Activated CD4-positive, alpha-beta T cell treated with anti-CD3 and anti-CD28 coated beads, Interleukin-2, amount 10 ng/mL, durations not matched to agents 24 days and 14 days (primary cell): ENCODE measurements at regions of chr1 and their contacts with region 1.

Region 1: DNA sequence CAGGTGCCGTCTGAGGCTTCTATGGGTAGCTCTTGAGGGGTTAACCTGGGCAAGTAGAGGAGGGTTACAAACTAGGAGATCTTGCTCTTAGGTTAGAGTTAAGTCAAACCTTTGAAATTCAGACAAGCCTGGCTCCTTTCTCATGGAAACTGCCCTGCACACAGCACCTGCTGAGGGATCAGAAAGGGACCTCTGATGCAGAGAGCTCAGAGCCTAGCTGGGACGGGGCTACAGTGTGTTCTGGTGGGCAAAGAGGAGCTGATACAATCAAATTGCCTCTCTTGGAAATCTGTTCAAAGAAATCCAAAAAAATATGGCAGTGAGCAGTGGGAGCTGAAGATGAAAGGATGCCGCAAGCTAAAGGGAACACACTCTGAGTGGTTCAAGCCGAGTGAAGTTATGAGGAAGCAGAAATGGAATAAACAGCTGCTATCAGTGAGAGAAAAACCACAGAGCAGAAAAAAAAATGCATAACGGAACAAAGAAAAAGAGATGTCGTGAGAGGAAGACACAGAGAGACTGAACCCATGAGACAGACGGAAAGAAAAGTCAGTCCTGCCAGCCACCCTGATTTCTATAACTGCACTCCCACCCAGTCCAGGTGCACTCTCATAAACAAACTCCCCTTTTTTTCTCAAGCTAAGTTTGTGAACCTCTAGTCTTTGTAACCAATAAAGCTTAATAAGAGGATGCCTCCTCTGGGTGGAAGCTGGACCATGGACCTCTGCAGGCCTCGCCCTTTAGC is 26.6 kb downstream of the PAFAH2 start:
- DNase-seq: peak; percentile 77
- H3K4me3 Mint-ChIP-seq: peak overlapping the region; percentile 47
- H3K27ac Mint-ChIP-seq: peak overlapping the region; percentile 89
- H3K4me1 Mint-ChIP-seq: peaks cover 25% of the 10 kb centered on the region
- H3K27me3 Mint-ChIP-seq: no peaks in the 10 kb centered on the region

Region 2: GRCh38 chr1:25895365-25895993 is 75.8 kb before region 1 on chr1:
- intact Hi-C with region 1: loop called (anchors 1 kb)
- DNase-seq: peak; percentile 97
- H3K4me3 Mint-ChIP-seq: no peak overlapping the region
- H3K27ac Mint-ChIP-seq: peak overlapping the region; percentile 64
- H3K4me1 Mint-ChIP-seq: peaks cover 24% of the 10 kb centered on the region
- H3K27me3 Mint-ChIP-seq: no peaks in the 10 kb centered on the region

Region 3: GRCh38 chr1:25952841-25953401 is 18.3 kb before region 1 on chr1:
- intact Hi-C with region 1: no loop called
- DNase-seq: no peak
- H3K4me3 Mint-ChIP-seq: no peak overlapping the region
- H3K27ac Mint-ChIP-seq: no peak overlapping the region
- H3K4me1 Mint-ChIP-seq: peaks cover 7% of the 10 kb centered on the region
- H3K27me3 Mint-ChIP-seq: no peaks in the 10 kb centered on the region